Vagina (tissue), 2 donors: ENCODE measurements at regions of chr11 and their contacts with region 1.

Region 1: DNA sequence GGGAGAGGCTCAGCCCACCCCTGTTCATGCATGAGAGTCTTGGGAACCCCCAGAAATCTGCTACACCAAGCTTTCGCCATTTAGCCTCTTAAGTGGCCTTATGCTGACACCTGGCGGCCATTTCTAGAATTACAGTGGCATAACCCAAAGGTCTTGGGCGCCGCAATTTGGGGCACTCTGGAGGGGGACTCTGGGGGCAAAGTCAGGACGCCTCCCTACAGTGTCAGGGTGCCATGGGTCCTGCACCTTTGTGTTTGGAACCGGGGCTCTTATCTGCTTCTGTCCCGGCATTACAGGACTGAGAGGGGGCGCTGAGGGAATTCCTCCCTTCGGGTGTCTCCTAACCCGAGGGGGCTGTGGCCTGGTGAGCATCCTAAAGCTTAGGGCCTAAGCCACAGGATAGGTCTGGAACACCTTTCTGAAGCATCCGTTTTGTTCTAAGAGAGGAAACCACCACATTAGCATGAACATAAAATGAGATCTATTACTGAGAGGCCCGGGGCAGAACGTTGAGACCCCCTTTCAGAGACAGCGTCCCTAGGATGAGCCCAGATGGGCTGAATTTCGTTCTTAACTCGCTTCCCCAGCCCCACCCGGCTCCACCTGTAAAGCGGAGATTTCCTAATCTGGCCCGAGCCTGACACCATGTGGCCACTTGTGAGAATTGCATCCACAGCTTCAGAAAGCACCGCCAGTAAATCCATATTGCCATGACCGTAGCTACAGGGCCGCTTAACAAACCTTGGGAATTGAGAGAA is 9.3 kb downstream of the INS start:
- DNase-seq: peak in 1 of 2 donors; percentile 90
- H3K4me3 ChIP-seq: peak overlapping the region in 1 of 2 donors; percentile 22
- H3K27ac ChIP-seq: no peak overlapping the region
- H3K4me1 ChIP-seq: peaks cover 4% of the 10 kb centered on the region
- H3K27me3 ChIP-seq: peaks cover 5% of the 10 kb centered on the region
- CTCF ChIP-seq: peak; percentile 97 to 98 (median 98)
- POLR2A ChIP-seq: no peak

Region 2: GRCh38 chr11:1652771-1653540 is 498.7 kb before region 1 on chr11:
- intact Hi-C with region 1: loop called (anchors 10 kb)
- DNase-seq: no peak
- H3K4me3 ChIP-seq: no peak overlapping the region
- H3K27ac ChIP-seq: no peak overlapping the region
- H3K4me1 ChIP-seq: peaks cover 9% of the 10 kb centered on the region
- H3K27me3 ChIP-seq: no peaks in the 10 kb centered on the region
- CTCF ChIP-seq: peak; percentile 87 to 99 (median 98)
- POLR2A ChIP-seq: no peak

Region 3: DNA sequence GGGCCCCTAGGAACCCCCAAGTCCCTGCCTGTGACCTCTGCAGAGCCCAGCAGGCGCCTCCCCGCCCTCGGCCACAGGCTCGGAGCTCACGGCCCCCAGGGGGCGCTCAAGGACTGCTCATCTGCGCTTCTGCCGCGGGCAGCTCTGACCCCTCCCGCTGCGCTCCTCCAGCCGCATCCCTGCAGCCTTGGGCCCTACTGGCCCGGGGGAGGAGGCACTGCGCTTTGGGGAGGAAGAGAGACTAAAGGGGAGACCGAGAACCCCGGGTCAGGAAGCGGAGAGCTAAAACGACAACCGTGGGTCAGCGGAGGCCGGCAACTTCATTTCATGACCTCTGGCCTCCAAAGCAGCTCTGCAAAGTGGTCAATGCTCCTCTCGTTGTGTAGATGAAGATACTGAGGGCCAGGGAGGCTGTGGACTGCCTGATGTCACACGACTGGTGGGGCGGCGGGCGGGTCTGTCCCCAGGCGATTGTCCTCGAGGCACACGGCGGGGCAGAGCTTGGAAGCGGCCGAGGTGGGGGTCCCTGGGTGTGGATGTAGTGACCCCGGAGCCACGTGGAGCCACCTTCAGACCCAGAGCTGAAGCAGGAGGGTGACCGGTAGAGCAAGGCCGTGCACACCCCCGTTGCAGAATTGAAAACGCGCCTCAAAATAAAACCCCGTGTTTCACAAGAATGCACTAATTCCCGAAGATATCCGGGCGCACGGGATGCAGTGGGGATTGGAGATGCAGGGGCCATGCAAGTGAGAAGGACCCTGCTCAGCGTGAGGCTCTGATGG is 457.4 kb before region 1 on chr11:
- intact Hi-C with region 1: loop called (anchors 10 kb)
- DNase-seq: no peak
- H3K4me3 ChIP-seq: peak overlapping the region; percentile 35 to 48
- H3K27ac ChIP-seq: peak overlapping the region; percentile 42
- H3K4me1 ChIP-seq: peaks cover 16% of the 10 kb centered on the region
- H3K27me3 ChIP-seq: no peaks in the 10 kb centered on the region
- CTCF ChIP-seq: peak; percentile 94 to 98 (median 96)
- POLR2A ChIP-seq: no peak

Region 4: GRCh38 chr11:1837171-1838076 is 314.3 kb before region 1 on chr11:
- intact Hi-C with region 1: loop called (anchors 5 kb)
- DNase-seq: no peak
- H3K4me3 ChIP-seq: no peak overlapping the region
- H3K27ac ChIP-seq: peak overlapping the region; percentile 39
- H3K4me1 ChIP-seq: peaks cover 36% of the 10 kb centered on the region
- H3K27me3 ChIP-seq: no peaks in the 10 kb centered on the region
- CTCF ChIP-seq: peak; percentile 92 to 96 (median 95)
- POLR2A ChIP-seq: no peak

Region 5: DNA sequence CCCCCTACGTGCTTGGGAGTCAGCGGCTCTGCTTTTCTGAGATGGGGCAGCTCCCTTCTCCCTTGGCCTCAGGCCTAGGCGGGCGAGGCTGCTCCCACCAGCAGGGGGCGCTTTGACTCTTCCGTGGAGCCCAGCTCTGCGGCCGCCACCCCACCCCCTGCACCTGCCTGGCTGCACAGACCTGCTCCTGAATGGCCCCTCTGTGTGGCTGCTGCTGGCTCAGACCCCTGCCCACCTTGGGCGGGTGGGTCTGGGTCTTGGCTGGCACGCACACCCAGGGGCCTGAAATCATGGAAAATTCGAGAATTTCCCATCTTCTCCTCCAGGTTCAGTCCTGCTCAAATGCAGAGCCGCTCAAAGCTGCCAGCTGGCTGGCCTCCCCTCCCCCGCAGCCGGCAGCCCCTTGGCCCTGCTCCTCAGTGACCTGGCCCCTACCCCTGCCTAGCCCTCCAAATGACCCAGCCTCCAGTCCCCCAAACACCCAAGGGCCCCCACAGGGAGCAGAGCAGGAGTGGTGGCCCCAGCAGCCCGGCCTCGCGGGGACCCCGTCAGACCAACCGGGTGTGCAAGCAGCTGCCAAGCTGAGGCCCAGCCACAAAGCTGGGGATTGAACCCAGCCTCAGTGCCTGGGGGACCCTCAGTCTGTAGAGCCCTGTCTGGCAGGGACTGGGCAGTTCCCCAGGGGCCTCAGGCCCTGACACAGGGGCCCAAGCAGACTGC is 269.0 kb before region 1 on chr11:
- intact Hi-C with region 1: loop called (anchors 5 kb)
- DNase-seq: peak in 1 of 2 donors; percentile 91
- H3K4me3 ChIP-seq: no peak overlapping the region
- H3K27ac ChIP-seq: peak overlapping the region; percentile 96
- H3K4me1 ChIP-seq: peaks cover 56% of the 10 kb centered on the region
- H3K27me3 ChIP-seq: no peaks in the 10 kb centered on the region
- CTCF ChIP-seq: peak; percentile 84 to 94 (median 89)
- POLR2A ChIP-seq: no peak